Gastrocnemius medialis (tissue), 4 donors: ENCODE measurements at regions of chr18 and their contacts with region 1.

Region 1: GRCh38 chr18:78074400-78075020 is 824.9 kb downstream of the GALR1 start:
- DNase-seq: no peak
- ATAC-seq: no peak
- H3K4me3 ChIP-seq: no peak overlapping the region
- H3K27ac ChIP-seq: no peak overlapping the region
- H3K4me1 ChIP-seq: no peaks in the 10 kb centered on the region
- H3K27me3 ChIP-seq: no peaks in the 10 kb centered on the region
- CTCF ChIP-seq: no peak
- POLR2A ChIP-seq: no peak

Region 2: GRCh38 chr18:77985526-77986281 is 88.8 kb before region 1 on chr18:
- in situ Hi-C with region 1: loop called in 1 of 4 experiments (anchors 25 kb)
- intact Hi-C with region 1: no loop called
- DNase-seq: no peak
- ATAC-seq: no peak
- H3K4me3 ChIP-seq: no peak overlapping the region
- H3K27ac ChIP-seq: no peak overlapping the region
- H3K4me1 ChIP-seq: no peaks in the 10 kb centered on the region
- H3K27me3 ChIP-seq: no peaks in the 10 kb centered on the region
- CTCF ChIP-seq: no peak
- POLR2A ChIP-seq: no peak

Region 3: GRCh38 chr18:78090584-78090983 is 16.1 kb after region 1 on chr18:
- in situ Hi-C with region 1: no loop called
- intact Hi-C with region 1: no loop called
- DNase-seq: no peak
- ATAC-seq: no peak
- H3K4me3 ChIP-seq: no peak overlapping the region
- H3K27ac ChIP-seq: no peak overlapping the region
- H3K4me1 ChIP-seq: no peaks in the 10 kb centered on the region
- H3K27me3 ChIP-seq: no peaks in the 10 kb centered on the region
- CTCF ChIP-seq: no peak
- POLR2A ChIP-seq: no peak

Region 4: DNA sequence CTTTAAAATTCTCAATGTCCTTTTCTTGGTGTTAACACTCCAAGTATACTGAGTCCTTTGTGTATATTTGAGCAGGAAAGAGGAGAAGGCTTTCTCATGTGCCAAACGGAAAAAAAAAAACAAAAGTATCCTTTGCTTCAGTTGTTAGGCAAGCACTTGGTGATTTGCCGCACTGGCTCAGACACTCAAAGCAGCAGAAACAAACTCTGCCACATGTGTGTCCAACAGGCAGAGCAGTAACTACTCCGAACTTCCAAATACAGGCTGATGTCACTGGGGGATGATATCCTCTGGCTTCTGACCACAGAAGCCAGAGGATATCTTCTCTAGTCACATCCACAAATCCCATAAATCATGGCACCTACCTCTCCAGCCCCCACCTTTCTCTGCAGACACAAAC is 797.1 kb after region 1 on chr18:
- in situ Hi-C with region 1: no loop called
- intact Hi-C with region 1: no loop called
- DNase-seq: no peak
- ATAC-seq: no peak
- H3K4me3 ChIP-seq: no peak overlapping the region
- H3K27ac ChIP-seq: no peak overlapping the region
- H3K4me1 ChIP-seq: no peaks in the 10 kb centered on the region
- H3K27me3 ChIP-seq: no peaks in the 10 kb centered on the region
- CTCF ChIP-seq: no peak
- POLR2A ChIP-seq: no peak